H1 (cell line): ENCODE measurements at regions of chr10 and their contacts with region 1.

Region 1: DNA sequence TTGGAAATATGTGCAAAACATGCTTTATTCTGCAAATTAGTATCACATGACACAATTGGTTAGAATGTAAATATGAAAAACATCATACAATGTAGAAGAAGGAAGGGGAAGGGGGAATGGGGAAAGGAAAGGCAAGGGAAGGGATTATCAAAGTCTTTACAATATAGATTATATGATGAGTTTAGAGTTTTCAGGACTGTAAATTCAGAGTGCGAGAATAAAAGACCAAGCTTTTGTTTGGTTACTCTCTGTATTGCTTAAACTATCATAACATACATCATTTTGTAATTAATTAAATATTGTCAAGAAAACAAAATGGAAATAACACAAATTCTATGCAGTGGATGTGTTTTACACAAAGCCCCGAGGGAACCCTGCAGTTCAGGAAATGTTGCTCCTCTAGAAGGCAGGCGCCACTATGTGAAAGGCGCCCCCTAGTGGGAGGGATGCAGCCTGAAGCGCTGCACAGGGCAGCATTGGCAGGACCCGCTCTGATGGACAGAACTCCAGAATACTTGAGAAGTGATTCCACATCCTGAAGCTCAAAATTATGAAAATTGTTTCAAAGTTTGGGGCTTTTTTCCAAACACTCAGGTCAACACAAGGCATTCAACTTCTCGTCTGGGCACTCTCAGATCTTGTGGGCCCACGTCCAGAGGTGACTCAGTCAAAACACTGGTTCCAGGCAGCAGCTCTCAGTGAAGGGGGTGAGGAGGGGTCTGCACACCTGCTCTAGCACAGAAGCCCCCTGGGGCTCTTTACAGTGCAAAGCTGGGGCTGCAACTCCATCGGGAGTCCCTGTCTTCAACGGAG is 31.6 kb upstream of the TMEM254 start:
- DNase-seq: peak; percentile 59 to 94
- H3K4me3 ChIP-seq: no peak overlapping the region
- H3K27ac ChIP-seq: no peak overlapping the region
- H3K4me1 ChIP-seq: no peaks in the 10 kb centered on the region
- H3K27me3 ChIP-seq: no peaks in the 10 kb centered on the region
- CTCF ChIP-seq: peak; percentile 93 to 96 (median 94)
- EP300 ChIP-seq: 0 out of 3 replicates have a peak, but pooled peaks of 1 of the 2 experiments have one; percentile 11
- POLR2A ChIP-seq: no peak
- RAD21 ChIP-seq: peak; percentile 75 to 82

Region 2: DNA sequence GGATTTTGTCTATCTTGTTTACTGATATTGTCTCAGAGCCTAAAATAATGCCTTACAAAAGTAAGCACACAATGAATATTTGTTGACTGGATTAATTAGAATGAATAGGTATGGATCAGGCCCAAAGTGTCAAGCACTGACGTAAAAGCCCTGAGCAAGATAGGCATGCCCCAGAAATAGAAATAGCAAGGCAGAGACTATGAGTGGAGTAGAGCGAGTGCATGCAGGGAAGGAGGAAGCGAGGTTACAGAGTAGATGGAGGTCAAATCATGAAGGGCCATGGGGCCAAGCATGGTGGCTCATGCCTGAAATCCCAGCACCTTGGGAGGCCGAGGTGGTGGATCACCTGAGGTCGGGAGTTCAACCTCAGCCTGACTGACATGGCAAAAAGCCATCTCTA is 46.3 kb before region 1 on chr10:
- CTCF ChIA-PET with region 1: no interaction called
- POLR2A ChIA-PET with region 1: no interaction called
- DNase-seq: no peak
- H3K4me3 ChIP-seq: no peak overlapping the region
- H3K27ac ChIP-seq: no peak overlapping the region
- H3K4me1 ChIP-seq: no peaks in the 10 kb centered on the region; a peak in 1 of 7 replicates
- H3K27me3 ChIP-seq: no peaks in the 10 kb centered on the region
- CTCF ChIP-seq: no peak
- EP300 ChIP-seq: no peak
- POLR2A ChIP-seq: no peak
- RAD21 ChIP-seq: no peak

Region 3: DNA sequence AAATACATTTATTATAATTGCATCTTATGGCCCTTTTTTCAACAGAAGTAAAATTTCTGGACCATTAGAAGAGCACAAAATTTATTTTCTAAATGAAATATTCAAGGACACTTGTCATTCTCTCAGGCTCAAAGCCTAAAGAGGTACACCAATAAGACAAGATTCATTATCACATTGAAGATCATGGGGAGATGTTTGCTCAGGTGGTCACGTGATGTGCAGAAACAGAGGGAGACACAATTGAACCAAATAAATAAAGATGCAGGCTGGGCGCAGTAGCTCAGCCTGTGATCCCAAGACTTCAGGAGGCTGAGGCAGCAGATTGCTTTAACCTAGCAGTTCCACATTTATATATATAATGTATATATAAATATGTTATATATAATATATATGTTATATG is 21.6 kb before region 1 on chr10:
- CTCF ChIA-PET with region 1: interaction called, 20 read pairs
- POLR2A ChIA-PET with region 1: no interaction called
- DNase-seq: no peak
- H3K4me3 ChIP-seq: no peak overlapping the region
- H3K27ac ChIP-seq: no peak overlapping the region
- H3K4me1 ChIP-seq: no peaks in the 10 kb centered on the region
- H3K27me3 ChIP-seq: no peaks in the 10 kb centered on the region; a peak in 1 of 7 replicates
- CTCF ChIP-seq: no peak
- EP300 ChIP-seq: no peak
- POLR2A ChIP-seq: no peak
- RAD21 ChIP-seq: no peak

Region 4: GRCh38 chr10:80064120-80064886 is 17.5 kb after region 1 on chr10:
- CTCF ChIA-PET with region 1: interaction called, 69 read pairs
- POLR2A ChIA-PET with region 1: interaction called, 4 read pairs
- DNase-seq: no peak
- H3K4me3 ChIP-seq: no peak overlapping the region
- H3K27ac ChIP-seq: no peak overlapping the region
- H3K4me1 ChIP-seq: peaks cover 0 to 11% (median 5%) of the 10 kb centered on the region in 4 experiments; a peak in 6 of 7 replicates
- H3K27me3 ChIP-seq: no peaks in the 10 kb centered on the region
- CTCF ChIP-seq: no peak
- EP300 ChIP-seq: no peak
- POLR2A ChIP-seq: no peak
- RAD21 ChIP-seq: no peak

Region 5: DNA sequence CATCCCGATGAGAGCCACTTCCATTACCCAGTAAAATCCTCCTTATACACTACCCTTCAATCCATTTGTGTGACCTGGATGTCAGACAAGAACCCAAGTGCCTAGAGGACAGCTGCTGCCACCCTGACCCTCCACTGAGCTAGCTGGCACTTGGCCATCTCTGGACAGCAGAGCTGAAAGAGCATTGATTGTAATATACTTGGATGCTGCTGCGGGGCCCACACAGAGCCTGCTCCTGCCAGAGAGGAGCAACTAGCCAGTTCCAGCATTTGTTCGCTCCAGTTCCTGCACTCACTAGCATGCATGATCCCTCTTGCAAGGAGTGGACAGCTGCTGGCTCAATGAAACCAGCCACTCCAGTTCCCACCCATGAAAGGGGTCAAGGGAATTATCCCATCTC is 23.2 kb after region 1 on chr10:
- CTCF ChIA-PET with region 1: interaction called, 30 read pairs
- POLR2A ChIA-PET with region 1: no interaction called
- DNase-seq: peak in 1 of 2 experiments; percentile 52
- H3K4me3 ChIP-seq: no peak overlapping the region
- H3K27ac ChIP-seq: no peak overlapping the region; the same call in 1 of the 2 replicates
- H3K4me1 ChIP-seq: peaks cover 5 to 21% (median 8%) of the 10 kb centered on the region in 4 experiments
- H3K27me3 ChIP-seq: no peaks in the 10 kb centered on the region
- CTCF ChIP-seq: no peak
- EP300 ChIP-seq: no peak
- POLR2A ChIP-seq: no peak
- RAD21 ChIP-seq: no peak

Region 6: DNA sequence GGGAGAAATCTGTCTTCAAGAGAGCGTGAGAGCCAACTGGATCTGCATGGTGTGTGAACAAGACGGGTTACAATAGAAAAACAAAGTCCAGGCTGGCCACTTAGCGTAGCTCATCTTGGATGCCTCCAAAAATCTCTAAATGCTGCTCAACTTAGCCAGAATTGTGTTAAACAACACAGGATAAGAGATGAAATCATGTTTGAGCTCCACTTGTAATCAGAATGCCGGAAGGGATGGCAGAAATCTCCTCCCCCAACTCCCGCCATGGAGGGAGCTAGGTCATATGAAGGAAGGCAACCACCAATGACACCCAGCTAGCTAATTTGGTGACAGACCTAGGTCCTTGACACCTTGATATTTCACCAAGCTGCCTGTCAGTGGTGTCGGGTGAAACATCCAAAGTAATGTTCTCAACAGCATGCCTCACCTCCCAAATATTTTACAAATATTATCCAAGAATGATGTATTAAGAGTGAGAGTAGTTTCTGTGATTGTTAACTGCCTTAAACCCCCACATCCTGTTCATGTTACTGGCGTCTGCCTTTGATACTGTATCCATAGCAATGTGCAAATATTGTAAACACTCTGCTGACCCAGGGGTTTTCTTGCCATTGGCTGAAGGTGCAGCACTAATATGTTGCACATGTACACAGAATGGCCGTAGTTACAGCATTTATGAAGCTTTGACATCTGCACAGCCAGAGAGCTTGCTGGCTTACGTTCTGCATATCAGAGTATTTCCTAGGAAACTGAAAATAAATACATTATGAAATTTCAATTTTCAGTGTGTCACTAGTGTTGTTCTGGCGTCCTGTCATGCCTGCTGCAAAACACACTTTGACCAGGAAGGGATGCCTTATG is 57.5 kb after region 1 on chr10:
- CTCF ChIA-PET with region 1: interaction called, 10 read pairs
- POLR2A ChIA-PET with region 1: no interaction called
- DNase-seq: no peak
- H3K4me3 ChIP-seq: no peak overlapping the region
- H3K27ac ChIP-seq: no peak overlapping the region
- H3K4me1 ChIP-seq: peaks cover 5 to 29% (median 19%) of the 10 kb centered on the region in 4 experiments; a peak in 6 of 7 replicates
- H3K27me3 ChIP-seq: no peaks in the 10 kb centered on the region
- CTCF ChIP-seq: no peak
- EP300 ChIP-seq: no peak
- POLR2A ChIP-seq: no peak
- RAD21 ChIP-seq: no peak